ENCODE measurements at regions of chr2 and their contacts with region 1.

Region 1: GRCh38 chr2:10832203-10832936 is 19.8 kb upstream of the PDIA6 start:
- DNase-seq: peak; percentile 84
- ATAC-seq: peak; percentile 90
- H3K4me3 Mint-ChIP-seq: no peak overlapping the region
- H3K27ac Mint-ChIP-seq: no peak overlapping the region
- H3K4me1 Mint-ChIP-seq: peaks cover 4% of the 10 kb centered on the region
- H3K27me3 Mint-ChIP-seq: peaks cover 51% of the 10 kb centered on the region

Region 2: GRCh38 chr2:10844097-10844496 is 11.7 kb after region 1 on chr2:
- CTCF ChIA-PET with region 1: interaction called, 24 read pairs
- DNase-seq: no peak
- ATAC-seq: no peak
- H3K4me3 Mint-ChIP-seq: no peak overlapping the region
- H3K27ac Mint-ChIP-seq: no peak overlapping the region
- H3K4me1 Mint-ChIP-seq: no peaks in the 10 kb centered on the region
- H3K27me3 Mint-ChIP-seq: peaks cover 9% of the 10 kb centered on the region

Region 3: GRCh38 chr2:11073251-11073650 is 240.9 kb after region 1 on chr2:
- CTCF ChIA-PET with region 1: interaction called, 10 read pairs
- DNase-seq: peak; percentile 46
- ATAC-seq: no peak
- H3K4me3 Mint-ChIP-seq: no peak overlapping the region
- H3K27ac Mint-ChIP-seq: no peak overlapping the region
- H3K4me1 Mint-ChIP-seq: peaks cover 13% of the 10 kb centered on the region
- H3K27me3 Mint-ChIP-seq: peaks cover 33% of the 10 kb centered on the region

Region 4: DNA sequence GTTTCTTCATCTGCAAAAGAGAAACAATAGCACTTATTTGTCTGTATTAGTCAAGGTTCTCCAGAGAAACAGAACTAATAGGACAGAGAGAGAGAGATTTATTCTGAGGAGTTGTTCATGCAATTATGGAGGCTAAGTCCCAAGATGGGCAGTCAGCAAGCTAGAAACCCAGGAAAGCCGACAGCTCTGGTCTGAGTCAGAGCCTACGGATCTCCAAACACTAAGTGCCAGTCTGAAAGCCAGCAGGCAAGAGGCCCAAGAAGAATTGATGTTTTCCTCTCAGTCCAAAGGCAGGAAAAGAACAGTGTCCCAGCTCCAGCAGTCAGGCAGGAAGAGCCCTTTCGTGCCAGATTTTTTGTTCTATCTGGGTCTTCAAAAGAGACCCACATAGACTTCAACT is 286.4 kb after region 1 on chr2:
- CTCF ChIA-PET with region 1: interaction called, 72 read pairs
- DNase-seq: no peak
- ATAC-seq: no peak
- H3K4me3 Mint-ChIP-seq: no peak overlapping the region
- H3K27ac Mint-ChIP-seq: no peak overlapping the region
- H3K4me1 Mint-ChIP-seq: peaks cover 2% of the 10 kb centered on the region
- H3K27me3 Mint-ChIP-seq: peaks cover 19% of the 10 kb centered on the region

Measured in activated CD8-positive, alpha-beta memory T cell treated with anti-CD3 and anti-CD28 coated beads, Interleukin-2, amount 10 ng/mL, durations not matched to agents 7 days and 5 days (primary cell).